ENCODE measurements at regions of chr18 and their contacts with region 1.

Region 1: GRCh38 chr18:58043491-58044379 is at the start of gene NEDD4L:
- DNase-seq: peak; percentile 48 to 85 (median 64)
- ATAC-seq: peak; percentile 75
- H3K4me3 ChIP-seq: peak within 1 kb of the TSS; percentile 72
- H3K4me3 Mint-ChIP-seq: peak within 1 kb of the TSS; percentile 97
- H3K27ac ChIP-seq: no peak within 1 kb of the TSS
- H3K27ac Mint-ChIP-seq: peak within 1 kb of the TSS; percentile 75
- H3K4me1 ChIP-seq: peaks cover 23% of the 10 kb centered on the region
- H3K4me1 Mint-ChIP-seq: peaks cover 33% of the 10 kb centered on the region
- H3K27me3 ChIP-seq: peaks cover 0 to 4% of the 10 kb centered on the region in 2 experiments
- H3K27me3 Mint-ChIP-seq: peaks cover 19% of the 10 kb centered on the region
- CTCF ChIP-seq: peak; percentile 80
- total RNA-seq, gene NEDD4L: 11.2 to 13.7 TPM

Region 2: DNA sequence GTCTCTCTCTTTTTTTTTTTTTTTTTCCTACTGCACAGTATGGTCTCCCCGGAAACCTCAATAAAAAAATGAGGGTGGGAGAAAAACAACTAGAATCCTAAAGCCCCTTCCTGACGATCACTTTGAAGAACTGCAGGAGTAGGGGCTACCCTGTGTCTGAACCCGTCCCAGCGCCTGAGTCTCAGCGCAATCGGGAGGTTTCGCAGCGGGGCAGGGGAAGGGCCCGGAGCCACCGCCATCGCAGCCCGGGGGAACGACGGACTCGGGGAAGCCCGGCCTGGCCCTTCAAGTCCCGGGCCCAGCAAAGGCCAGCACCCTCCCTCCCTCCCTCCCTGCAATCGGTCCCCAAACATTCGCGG is 422.5 kb before region 1 on chr18:
- CTCF ChIA-PET with region 1: no interaction called
- POLR2A ChIA-PET with region 1: no interaction called
- intact Hi-C with region 1: loop called in 1 of 2 experiments (anchors 5 kb)
- DNase-seq: peak in 2 of 14 experiments; percentile 11 to 13
- ATAC-seq: peak; percentile 11
- H3K4me3 ChIP-seq: peak overlapping the region; percentile 91
- H3K4me3 Mint-ChIP-seq: peak overlapping the region; percentile 95
- H3K27ac ChIP-seq: peak overlapping the region; percentile 70 to 91
- H3K27ac Mint-ChIP-seq: peak overlapping the region; percentile 98
- H3K4me1 ChIP-seq: peaks cover 33% of the 10 kb centered on the region
- H3K4me1 Mint-ChIP-seq: peaks cover 33% of the 10 kb centered on the region
- H3K27me3 ChIP-seq: no peaks in the 10 kb centered on the region
- H3K27me3 Mint-ChIP-seq: no peaks in the 10 kb centered on the region
- CTCF ChIP-seq: no peak

Region 3: GRCh38 chr18:58135701-58136331 is 92.1 kb after region 1 on chr18:
- CTCF ChIA-PET with region 1: interaction called, 4 read pairs
- POLR2A ChIA-PET with region 1: no interaction called
- intact Hi-C with region 1: loop called (anchors 1 to 5 kb)
- DNase-seq: peak in 12 of 14 experiments; percentile 12 to 69 (median 24)
- ATAC-seq: peak; percentile 46
- H3K4me3 ChIP-seq: no peak overlapping the region
- H3K4me3 Mint-ChIP-seq: no peak overlapping the region
- H3K27ac ChIP-seq: no peak overlapping the region
- H3K27ac Mint-ChIP-seq: no peak overlapping the region
- H3K4me1 ChIP-seq: peaks cover 11% of the 10 kb centered on the region
- H3K4me1 Mint-ChIP-seq: peaks cover 4% of the 10 kb centered on the region
- H3K27me3 ChIP-seq: peaks cover 4 to 5% of the 10 kb centered on the region in 2 experiments
- H3K27me3 Mint-ChIP-seq: peaks cover 45% of the 10 kb centered on the region
- CTCF ChIP-seq: peak; percentile 66

Region 4: GRCh38 chr18:58321986-58322385 is 278.3 kb after region 1 on chr18:
- CTCF ChIA-PET with region 1: no interaction called
- POLR2A ChIA-PET with region 1: interaction called, 3 read pairs
- intact Hi-C with region 1: loop called in 1 of 2 experiments (anchors 5 kb)
- DNase-seq: peak; percentile 24 to 80 (median 48)
- ATAC-seq: peak; percentile 96
- H3K4me3 ChIP-seq: no peak overlapping the region
- H3K4me3 Mint-ChIP-seq: peak overlapping the region; percentile 72
- H3K27ac ChIP-seq: no peak overlapping the region
- H3K27ac Mint-ChIP-seq: peak overlapping the region; percentile 83
- H3K4me1 ChIP-seq: peaks cover 11% of the 10 kb centered on the region
- H3K4me1 Mint-ChIP-seq: peaks cover 21% of the 10 kb centered on the region
- H3K27me3 ChIP-seq: no peaks in the 10 kb centered on the region
- H3K27me3 Mint-ChIP-seq: no peaks in the 10 kb centered on the region
- CTCF ChIP-seq: peak; percentile 52

Region 5: DNA sequence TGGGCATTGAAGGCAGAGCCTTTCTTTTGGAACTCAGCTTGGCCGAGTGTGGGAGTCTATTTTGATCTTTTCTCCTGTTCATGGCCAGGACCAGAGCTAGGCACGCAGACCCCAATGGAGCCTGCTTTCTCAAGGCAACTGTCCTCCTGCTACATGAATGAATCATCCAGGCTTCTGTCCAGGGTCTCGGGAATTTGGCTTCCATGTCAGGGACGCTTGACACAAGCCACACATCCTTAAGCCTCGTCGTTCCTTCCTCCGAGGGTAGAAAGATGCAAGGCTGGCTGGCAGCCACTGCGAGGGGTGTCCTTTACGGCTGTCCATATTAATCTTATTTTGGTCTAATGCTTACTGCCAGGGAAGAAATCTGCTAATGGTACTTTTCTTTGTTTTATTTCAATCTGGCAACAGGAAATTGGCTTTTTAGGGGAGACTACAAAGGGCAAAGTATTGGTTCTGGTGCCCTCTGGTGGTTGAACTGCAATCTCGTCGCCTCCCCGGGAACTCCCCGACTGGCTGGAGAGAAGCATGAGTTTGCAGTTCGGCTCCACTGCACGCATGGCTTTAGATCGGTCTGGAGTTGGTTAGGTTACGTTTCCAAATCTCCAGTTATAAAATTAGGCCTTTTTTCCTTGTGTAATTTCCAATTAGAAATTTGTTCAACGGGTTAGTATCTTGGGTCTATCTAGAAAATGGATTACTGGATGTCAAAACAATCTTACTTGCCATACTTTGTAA is 449.9 kb after region 1 on chr18:
- CTCF ChIA-PET with region 1: no interaction called
- POLR2A ChIA-PET with region 1: no interaction called
- intact Hi-C with region 1: loop called (anchors 5 kb)
- DNase-seq: peak; percentile 48 to 83 (median 58)
- ATAC-seq: peak; percentile 96
- H3K4me3 ChIP-seq: no peak overlapping the region
- H3K4me3 Mint-ChIP-seq: no peak overlapping the region
- H3K27ac ChIP-seq: no peak overlapping the region
- H3K27ac Mint-ChIP-seq: no peak overlapping the region
- H3K4me1 ChIP-seq: peaks cover 6% of the 10 kb centered on the region
- H3K4me1 Mint-ChIP-seq: peaks cover 7% of the 10 kb centered on the region
- H3K27me3 ChIP-seq: peaks cover 2 to 6% of the 10 kb centered on the region in 2 experiments
- H3K27me3 Mint-ChIP-seq: peaks cover 38% of the 10 kb centered on the region
- CTCF ChIP-seq: peak; percentile 86

Region 6: GRCh38 chr18:59056706-59057492 is 1013.2 kb after region 1 on chr18:
- CTCF ChIA-PET with region 1: no interaction called
- POLR2A ChIA-PET with region 1: no interaction called
- intact Hi-C with region 1: no loop called
- DNase-seq: peak in 12 of 14 experiments; percentile 8 to 67 (median 33)
- ATAC-seq: no peak
- H3K4me3 ChIP-seq: no peak overlapping the region
- H3K4me3 Mint-ChIP-seq: no peak overlapping the region
- H3K27ac ChIP-seq: no peak overlapping the region
- H3K27ac Mint-ChIP-seq: no peak overlapping the region
- H3K4me1 ChIP-seq: no peaks in the 10 kb centered on the region
- H3K4me1 Mint-ChIP-seq: no peaks in the 10 kb centered on the region
- H3K27me3 ChIP-seq: peaks cover 3 to 4% of the 10 kb centered on the region in 2 experiments
- H3K27me3 Mint-ChIP-seq: peaks cover 34% of the 10 kb centered on the region
- CTCF ChIP-seq: peak; percentile 45

Region 7: DNA sequence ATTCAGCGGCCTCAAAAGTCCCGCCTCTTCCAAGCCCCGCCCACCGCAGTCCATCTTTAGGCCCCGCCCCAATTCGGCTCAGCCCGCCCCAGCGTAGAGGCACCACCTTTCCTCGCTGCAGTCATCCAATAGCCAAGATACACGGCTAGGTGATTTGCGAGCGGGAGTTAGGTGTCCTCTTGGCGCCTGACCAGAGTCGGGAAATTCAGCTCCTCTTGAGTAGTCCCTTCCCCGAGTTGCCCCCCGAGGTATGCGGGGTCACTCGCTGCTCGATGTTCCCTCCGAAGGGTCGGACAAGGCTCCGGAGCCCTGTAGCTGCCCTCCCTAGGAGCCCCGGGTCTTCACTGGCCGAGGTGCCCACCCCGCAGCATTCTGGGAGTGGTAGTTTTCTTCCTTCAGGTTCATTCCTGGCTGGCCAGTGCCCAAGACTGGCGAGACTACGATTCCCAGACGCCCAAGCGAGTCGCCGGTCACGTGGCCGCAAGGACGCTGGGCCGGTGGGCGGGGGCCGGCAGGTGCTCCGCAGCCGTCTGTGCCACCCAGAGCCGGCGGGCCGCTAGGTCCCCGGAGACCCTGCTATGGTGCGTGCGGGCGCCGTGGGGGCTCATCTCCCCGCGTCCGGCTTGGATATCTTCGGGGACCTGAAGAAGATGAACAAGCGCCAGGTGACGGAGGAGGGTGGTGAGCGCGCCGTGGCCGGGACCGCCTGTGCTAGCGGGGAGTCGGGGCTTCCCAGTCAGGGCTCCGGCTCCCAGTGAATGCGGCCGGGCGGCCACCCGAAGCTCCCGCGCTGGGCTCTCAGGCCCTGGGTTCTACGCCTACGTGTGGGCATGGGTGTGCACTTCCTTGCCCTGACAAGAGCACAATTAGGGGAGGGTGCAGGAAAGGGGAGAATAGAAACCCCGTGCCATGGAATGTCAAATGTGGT is 1095.9 kb after region 1 on chr18 and contains the start of gene SEC11C:
- CTCF ChIA-PET with region 1: no interaction called
- POLR2A ChIA-PET with region 1: no interaction called
- intact Hi-C with region 1: loop called in 1 of 2 experiments (anchors 5 kb)
- DNase-seq: peak; percentile 91 to 98 (median 94)
- ATAC-seq: peak; percentile 87
- H3K4me3 ChIP-seq: peak within 1 kb of the TSS; percentile 78
- H3K4me3 Mint-ChIP-seq: peak within 1 kb of the TSS; percentile 93
- H3K27ac ChIP-seq: peak within 1 kb of the TSS; percentile 94 to 99
- H3K27ac Mint-ChIP-seq: peak within 1 kb of the TSS; percentile 98
- H3K4me1 ChIP-seq: peaks cover 32% of the 10 kb centered on the region
- H3K4me1 Mint-ChIP-seq: peaks cover 38% of the 10 kb centered on the region
- H3K27me3 ChIP-seq: peaks cover 0 to 9% of the 10 kb centered on the region in 2 experiments
- H3K27me3 Mint-ChIP-seq: peaks cover 18% of the 10 kb centered on the region
- CTCF ChIP-seq: no peak
- total RNA-seq, gene SEC11C: 42.0 to 44.1 TPM

Measured in CD4-positive, alpha-beta T cell (primary cell).